ENCODE measurements at regions of chr15 and their contacts with region 1.

Region 1: DNA sequence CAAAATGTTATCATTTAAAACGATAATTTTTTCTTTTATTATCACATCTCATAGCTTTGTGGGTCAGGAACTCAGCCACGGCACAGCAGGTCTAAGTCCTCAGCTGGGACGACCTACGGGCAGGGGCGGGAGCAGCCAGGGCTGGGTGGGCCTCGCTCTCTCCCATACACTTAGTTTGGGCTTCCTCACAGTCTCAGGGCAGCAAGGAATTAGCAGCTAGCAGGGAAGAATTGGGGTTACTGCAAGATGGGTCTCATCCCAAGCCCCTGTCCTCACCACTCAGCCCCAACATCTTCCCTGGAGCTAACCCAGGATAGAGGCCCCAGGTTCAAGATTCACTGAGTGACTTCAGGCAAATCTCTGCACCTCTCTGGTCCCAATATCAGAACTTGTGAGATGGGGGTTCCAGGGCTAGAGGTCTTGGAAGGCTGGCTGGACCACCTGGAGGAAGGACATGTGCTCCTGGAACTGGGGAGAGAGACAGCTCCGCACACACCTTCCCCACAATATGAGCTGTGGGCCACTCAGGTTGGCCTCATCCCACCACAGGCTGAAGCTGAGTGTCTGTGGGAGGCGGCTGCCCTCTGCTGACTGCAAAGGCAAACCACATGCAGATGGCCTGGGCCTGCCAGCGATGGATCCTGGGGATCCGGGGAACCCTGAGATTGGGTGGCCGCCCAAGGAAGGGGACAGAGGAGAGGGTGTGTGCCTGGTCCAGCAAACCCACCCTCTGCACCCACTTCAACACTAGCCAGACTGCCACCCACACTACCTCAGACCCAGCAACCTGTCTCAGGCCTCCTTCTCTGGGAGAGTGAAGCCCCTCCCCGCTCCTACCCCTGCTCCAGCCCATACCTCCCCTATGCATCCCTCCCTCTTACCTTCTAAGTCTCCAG is 45.0 kb downstream of the CYP11A1 start:
- DNase-seq: peak; percentile 77
- ATAC-seq: peak; percentile 77
- H3K4me3 Mint-ChIP-seq: no peak overlapping the region
- H3K27ac Mint-ChIP-seq: no peak overlapping the region
- H3K4me1 Mint-ChIP-seq: peaks cover 27% of the 10 kb centered on the region
- H3K27me3 Mint-ChIP-seq: no peaks in the 10 kb centered on the region
- CTCF ChIP-seq: peak; percentile 77

Region 2: DNA sequence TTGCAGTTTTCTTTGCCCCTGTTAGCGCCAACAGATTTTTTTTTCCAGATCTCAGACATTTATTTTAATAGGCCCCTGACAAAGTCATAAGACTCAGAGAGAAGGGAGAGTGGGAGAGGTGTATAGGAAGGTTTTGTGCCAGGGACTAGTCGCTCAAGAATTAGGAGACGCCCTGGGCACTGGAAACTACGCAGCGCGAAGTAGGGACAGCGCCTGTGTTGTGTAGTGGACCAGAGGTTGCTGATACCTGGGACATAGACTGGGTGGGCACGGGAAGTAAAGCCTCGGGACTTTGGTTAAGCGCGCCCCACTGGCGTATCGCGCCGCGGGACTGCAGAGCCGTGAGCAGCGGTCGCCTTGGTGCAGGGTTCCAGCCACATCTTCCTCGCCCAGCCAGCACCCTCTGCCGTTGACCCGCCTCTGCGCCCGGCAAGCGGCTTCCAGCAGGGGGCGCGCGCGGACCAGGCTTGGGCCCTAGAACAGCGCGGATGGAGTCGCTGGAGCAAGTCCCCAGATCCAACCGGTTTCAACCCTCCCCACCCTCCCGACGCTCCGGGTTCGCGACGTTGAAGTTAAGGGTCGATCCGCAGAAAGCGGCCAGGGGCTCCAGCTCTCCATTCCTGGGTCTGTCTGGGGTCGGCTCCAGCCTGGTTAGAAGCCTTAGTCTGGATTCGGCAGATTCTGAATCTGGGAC is 195.0 kb before region 1 on chr15:
- CTCF ChIA-PET with region 1: interaction called, 67 read pairs
- POLR2A ChIA-PET with region 1: interaction called, 5 read pairs
- intact Hi-C with region 1: loop called (anchors 5 kb)
- DNase-seq: peak; percentile 92
- ATAC-seq: peak; percentile 92
- H3K4me3 Mint-ChIP-seq: no peak overlapping the region
- H3K27ac Mint-ChIP-seq: no peak overlapping the region
- H3K4me1 Mint-ChIP-seq: peaks cover 17% of the 10 kb centered on the region
- H3K27me3 Mint-ChIP-seq: peaks cover 60% of the 10 kb centered on the region
- CTCF ChIP-seq: peak; percentile 93

Region 3: DNA sequence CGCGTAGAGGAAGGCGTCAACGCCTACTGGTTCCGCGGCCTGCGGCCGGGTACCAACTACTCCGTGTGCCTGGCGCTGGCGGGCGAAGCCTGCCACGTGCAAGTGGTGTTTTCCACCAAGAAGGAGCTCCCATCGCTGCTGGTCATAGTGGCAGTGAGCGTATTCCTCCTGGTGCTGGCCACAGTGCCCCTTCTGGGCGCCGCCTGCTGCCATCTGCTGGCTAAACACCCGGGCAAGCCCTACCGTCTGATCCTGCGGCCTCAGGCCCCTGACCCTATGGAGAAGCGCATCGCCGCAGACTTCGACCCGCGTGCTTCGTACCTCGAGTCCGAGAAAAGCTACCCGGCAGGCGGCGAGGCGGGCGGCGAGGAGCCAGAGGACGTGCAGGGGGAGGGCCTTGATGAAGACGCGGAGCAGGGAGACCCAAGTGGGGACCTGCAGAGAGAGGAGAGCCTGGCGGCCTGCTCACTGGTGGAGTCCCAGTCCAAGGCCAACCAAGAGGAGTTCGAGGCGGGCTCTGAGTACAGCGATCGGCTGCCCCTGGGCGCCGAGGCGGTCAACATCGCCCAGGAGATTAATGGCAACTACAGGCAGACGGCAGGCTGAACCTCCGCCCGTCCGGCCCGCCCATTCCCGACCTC is 187.9 kb before region 1 on chr15:
- CTCF ChIA-PET with region 1: interaction called, 67 read pairs
- POLR2A ChIA-PET with region 1: no interaction called
- intact Hi-C with region 1: loop called (anchors 5 kb)
- DNase-seq: peak; percentile 42
- ATAC-seq: no peak
- H3K4me3 Mint-ChIP-seq: no peak overlapping the region
- H3K27ac Mint-ChIP-seq: no peak overlapping the region
- H3K4me1 Mint-ChIP-seq: peaks cover 37% of the 10 kb centered on the region
- H3K27me3 Mint-ChIP-seq: peaks cover 77% of the 10 kb centered on the region
- CTCF ChIP-seq: peak; percentile 47

Region 4: GRCh38 chr15:74196179-74196590 is 126.2 kb before region 1 on chr15:
- CTCF ChIA-PET with region 1: no interaction called
- POLR2A ChIA-PET with region 1: no interaction called
- intact Hi-C with region 1: no loop called
- DNase-seq: no peak
- ATAC-seq: no peak
- H3K4me3 Mint-ChIP-seq: no peak overlapping the region
- H3K27ac Mint-ChIP-seq: no peak overlapping the region
- H3K4me1 Mint-ChIP-seq: peaks cover 4% of the 10 kb centered on the region
- H3K27me3 Mint-ChIP-seq: no peaks in the 10 kb centered on the region
- CTCF ChIP-seq: no peak

Region 5: DNA sequence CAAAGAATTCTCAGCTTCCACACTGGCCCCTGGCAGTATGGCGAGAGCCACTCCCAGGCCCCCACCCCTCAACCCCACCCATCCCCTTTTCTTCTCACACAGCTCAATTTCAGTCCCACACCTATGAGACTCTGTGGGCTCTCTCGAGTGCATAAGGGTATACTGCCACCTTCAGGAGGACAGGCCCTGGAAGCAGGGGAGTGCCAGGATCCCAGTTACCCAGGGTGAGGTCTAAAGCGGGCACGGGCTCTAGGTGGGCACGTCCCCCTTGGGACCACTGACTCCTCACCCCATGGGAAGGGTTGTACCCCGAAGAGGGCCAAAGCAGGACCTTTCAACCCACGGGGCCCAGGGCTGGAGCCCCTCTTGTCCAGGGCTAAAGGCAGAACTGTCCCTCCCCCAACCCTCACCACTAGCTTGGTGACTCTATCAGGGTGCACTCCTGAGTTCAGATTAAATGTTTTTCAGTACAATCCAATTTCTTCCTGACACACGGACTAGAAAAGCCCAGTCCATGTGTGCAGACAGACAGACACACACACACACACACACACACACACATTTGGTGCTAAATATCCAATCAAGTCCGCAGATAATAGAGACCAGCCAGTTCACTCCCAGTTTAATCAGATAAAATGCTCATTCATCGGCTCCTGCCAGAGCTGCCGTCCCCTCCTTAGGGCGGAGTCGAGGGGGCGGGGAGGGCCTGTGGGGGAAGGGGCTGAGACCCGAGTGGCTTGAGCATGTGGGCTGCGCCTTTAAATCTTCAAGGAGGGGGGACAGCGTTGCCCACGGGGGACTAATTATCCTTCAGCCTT is 14.4 kb before region 1 on chr15:
- CTCF ChIA-PET with region 1: interaction called, 19 read pairs
- POLR2A ChIA-PET with region 1: no interaction called
- intact Hi-C with region 1: no loop called
- DNase-seq: peak; percentile 68
- ATAC-seq: peak; percentile 84
- H3K4me3 Mint-ChIP-seq: no peak overlapping the region
- H3K27ac Mint-ChIP-seq: no peak overlapping the region
- H3K4me1 Mint-ChIP-seq: no peaks in the 10 kb centered on the region
- H3K27me3 Mint-ChIP-seq: peaks cover 8% of the 10 kb centered on the region
- CTCF ChIP-seq: peak; percentile 56

Measured in activated CD8-positive, alpha-beta T cell treated with anti-CD3 and anti-CD28 coated beads for 36 hours (primary cell).